Naive thymus-derived CD4-positive, alpha-beta T cell (primary cell): ENCODE measurements at regions of chr1 and their contacts with region 1.

Region 1: GRCh38 chr1:111346089-111346885 is 55.6 kb downstream of the CHIA start:
- DNase-seq: peak; percentile 74 to 94 (median 92)
- ATAC-seq: peak; percentile 94
- H3K4me3 ChIP-seq: peak overlapping the region; percentile 90
- H3K4me3 Mint-ChIP-seq: peak overlapping the region; percentile 85 to 97 (median 92)
- H3K27ac ChIP-seq: peak overlapping the region; percentile 61
- H3K27ac Mint-ChIP-seq: peak overlapping the region; percentile 38 to 97 (median 90)
- H3K4me1 ChIP-seq: peaks cover 5 to 9% of the 10 kb centered on the region in 2 donors
- H3K4me1 Mint-ChIP-seq: peaks cover 13 to 26% (median 19%) of the 10 kb centered on the region in 7 donors
- H3K27me3 ChIP-seq: no peaks in the 10 kb centered on the region
- H3K27me3 Mint-ChIP-seq: peaks cover 0 to 19% (median 0%) of the 10 kb centered on the region in 5 donors

Region 2: GRCh38 chr1:110783292-110783918 is 562.9 kb before region 1 on chr1:
- CTCF ChIA-PET with region 1: no interaction called
- POLR2A ChIA-PET with region 1: no interaction called
- intact Hi-C with region 1: no loop called
- DNase-seq: peak in 8 of 9 donors; percentile 44 to 78 (median 70)
- ATAC-seq: peak; percentile 84
- H3K4me3 ChIP-seq: no peak overlapping the region
- H3K4me3 Mint-ChIP-seq: peak overlapping the region in 4 of 10 donors; percentile 3 to 29 (median 21)
- H3K27ac ChIP-seq: no peak overlapping the region
- H3K27ac Mint-ChIP-seq: peak overlapping the region in 6 of 9 donors; percentile 9 to 88 (median 66)
- H3K4me1 ChIP-seq: peaks cover 54 to 63% of the 10 kb centered on the region in 2 donors
- H3K4me1 Mint-ChIP-seq: peaks cover 42 to 79% (median 70%) of the 10 kb centered on the region in 7 donors
- H3K27me3 ChIP-seq: no peaks in the 10 kb centered on the region
- H3K27me3 Mint-ChIP-seq: peaks cover 0 to 14% (median 0%) of the 10 kb centered on the region in 5 donors

Region 3: GRCh38 chr1:111139956-111140679 is 206.2 kb before region 1 on chr1 and contains the starts of genes CEPT1 and DRAM2:
- CTCF ChIA-PET with region 1: no interaction called
- POLR2A ChIA-PET with region 1: interaction called, 4 read pairs
- intact Hi-C with region 1: loop called (anchors 1 to 5 kb)
- DNase-seq: peak; percentile 77 to 93 (median 89)
- ATAC-seq: peak; percentile 95
- H3K4me3 ChIP-seq: peak within 1 kb of the TSS; percentile 91
- H3K4me3 Mint-ChIP-seq: peak within 1 kb of the TSS; percentile 87 to 100 (median 98)
- H3K27ac ChIP-seq: peak within 1 kb of the TSS; percentile 93
- H3K27ac Mint-ChIP-seq: peak within 1 kb of the TSS; percentile 91 to 100 (median 97)
- H3K4me1 ChIP-seq: peaks cover 18 to 22% of the 10 kb centered on the region in 2 donors
- H3K4me1 Mint-ChIP-seq: peaks cover 40 to 75% (median 57%) of the 10 kb centered on the region in 7 donors
- H3K27me3 ChIP-seq: no peaks in the 10 kb centered on the region
- H3K27me3 Mint-ChIP-seq: no peaks in the 10 kb centered on the region
- total RNA-seq, gene CEPT1: 39.1 to 57.5 (median 40.2) TPM
- total RNA-seq, gene DRAM2: 26.9 to 51.6 (median 43.5) TPM

Region 4: GRCh38 chr1:111203681-111204200 is 142.5 kb before region 1 on chr1:
- CTCF ChIA-PET with region 1: no interaction called
- POLR2A ChIA-PET with region 1: interaction called, 4 read pairs
- intact Hi-C with region 1: loop called in 1 of 2 experiments (anchors 5 kb)
- DNase-seq: peak; percentile 51 to 86 (median 82)
- ATAC-seq: peak; percentile 71
- H3K4me3 ChIP-seq: peak overlapping the region; percentile 84
- H3K4me3 Mint-ChIP-seq: peak overlapping the region; percentile 90 to 100 (median 99)
- H3K27ac ChIP-seq: peak overlapping the region; percentile 90
- H3K27ac Mint-ChIP-seq: peak overlapping the region; percentile 80 to 99 (median 96)
- H3K4me1 ChIP-seq: peaks cover 30 to 32% of the 10 kb centered on the region in 2 donors
- H3K4me1 Mint-ChIP-seq: peaks cover 32 to 76% (median 61%) of the 10 kb centered on the region in 7 donors
- H3K27me3 ChIP-seq: no peaks in the 10 kb centered on the region
- H3K27me3 Mint-ChIP-seq: no peaks in the 10 kb centered on the region

Region 5: GRCh38 chr1:111366256-111366655 is 20.0 kb after region 1 on chr1:
- CTCF ChIA-PET with region 1: no interaction called
- POLR2A ChIA-PET with region 1: no interaction called
- intact Hi-C with region 1: no loop called
- DNase-seq: no peak
- ATAC-seq: no peak
- H3K4me3 ChIP-seq: no peak overlapping the region
- H3K4me3 Mint-ChIP-seq: no peak overlapping the region
- H3K27ac ChIP-seq: no peak overlapping the region
- H3K27ac Mint-ChIP-seq: no peak overlapping the region
- H3K4me1 ChIP-seq: no peaks in the 10 kb centered on the region
- H3K4me1 Mint-ChIP-seq: no peaks in the 10 kb centered on the region
- H3K27me3 ChIP-seq: no peaks in the 10 kb centered on the region
- H3K27me3 Mint-ChIP-seq: peaks cover 15 to 46% (median 40%) of the 10 kb centered on the region in 5 donors

Region 6: GRCh38 chr1:111399792-111400610 is 53.7 kb after region 1 on chr1:
- CTCF ChIA-PET with region 1: no interaction called
- POLR2A ChIA-PET with region 1: interaction called, 3 read pairs
- intact Hi-C with region 1: loop called in 1 of 2 experiments (anchors 1 kb)
- DNase-seq: peak in 6 of 9 donors; percentile 19 to 43 (median 32)
- ATAC-seq: no peak
- H3K4me3 ChIP-seq: no peak overlapping the region
- H3K4me3 Mint-ChIP-seq: peak overlapping the region in 1 of 10 donors; percentile 35
- H3K27ac ChIP-seq: no peak overlapping the region
- H3K27ac Mint-ChIP-seq: peak overlapping the region in 1 of 9 donors; percentile 46
- H3K4me1 ChIP-seq: no peaks in the 10 kb centered on the region
- H3K4me1 Mint-ChIP-seq: peaks cover 3 to 17% (median 13%) of the 10 kb centered on the region in 7 donors
- H3K27me3 ChIP-seq: no peaks in the 10 kb centered on the region
- H3K27me3 Mint-ChIP-seq: peaks cover 0 to 64% (median 0%) of the 10 kb centered on the region in 5 donors

Region 7: GRCh38 chr1:111406321-111406768 is 60.1 kb after region 1 on chr1:
- CTCF ChIA-PET with region 1: no interaction called
- POLR2A ChIA-PET with region 1: no interaction called
- intact Hi-C with region 1: loop called in 1 of 2 experiments (anchors 2 kb)
- DNase-seq: peak in 8 of 9 donors; percentile 33 to 74 (median 64)
- ATAC-seq: peak; percentile 99
- H3K4me3 ChIP-seq: no peak overlapping the region
- H3K4me3 Mint-ChIP-seq: peak overlapping the region; percentile 29 to 81 (median 61)
- H3K27ac ChIP-seq: peak overlapping the region; percentile 54
- H3K27ac Mint-ChIP-seq: peak overlapping the region in 8 of 9 donors; percentile 67 to 90 (median 78)
- H3K4me1 ChIP-seq: peaks cover 12 to 24% of the 10 kb centered on the region in 2 donors
- H3K4me1 Mint-ChIP-seq: peaks cover 14 to 38% (median 31%) of the 10 kb centered on the region in 7 donors
- H3K27me3 ChIP-seq: no peaks in the 10 kb centered on the region
- H3K27me3 Mint-ChIP-seq: peaks cover 0 to 26% (median 0%) of the 10 kb centered on the region in 5 donors

Region 8: DNA sequence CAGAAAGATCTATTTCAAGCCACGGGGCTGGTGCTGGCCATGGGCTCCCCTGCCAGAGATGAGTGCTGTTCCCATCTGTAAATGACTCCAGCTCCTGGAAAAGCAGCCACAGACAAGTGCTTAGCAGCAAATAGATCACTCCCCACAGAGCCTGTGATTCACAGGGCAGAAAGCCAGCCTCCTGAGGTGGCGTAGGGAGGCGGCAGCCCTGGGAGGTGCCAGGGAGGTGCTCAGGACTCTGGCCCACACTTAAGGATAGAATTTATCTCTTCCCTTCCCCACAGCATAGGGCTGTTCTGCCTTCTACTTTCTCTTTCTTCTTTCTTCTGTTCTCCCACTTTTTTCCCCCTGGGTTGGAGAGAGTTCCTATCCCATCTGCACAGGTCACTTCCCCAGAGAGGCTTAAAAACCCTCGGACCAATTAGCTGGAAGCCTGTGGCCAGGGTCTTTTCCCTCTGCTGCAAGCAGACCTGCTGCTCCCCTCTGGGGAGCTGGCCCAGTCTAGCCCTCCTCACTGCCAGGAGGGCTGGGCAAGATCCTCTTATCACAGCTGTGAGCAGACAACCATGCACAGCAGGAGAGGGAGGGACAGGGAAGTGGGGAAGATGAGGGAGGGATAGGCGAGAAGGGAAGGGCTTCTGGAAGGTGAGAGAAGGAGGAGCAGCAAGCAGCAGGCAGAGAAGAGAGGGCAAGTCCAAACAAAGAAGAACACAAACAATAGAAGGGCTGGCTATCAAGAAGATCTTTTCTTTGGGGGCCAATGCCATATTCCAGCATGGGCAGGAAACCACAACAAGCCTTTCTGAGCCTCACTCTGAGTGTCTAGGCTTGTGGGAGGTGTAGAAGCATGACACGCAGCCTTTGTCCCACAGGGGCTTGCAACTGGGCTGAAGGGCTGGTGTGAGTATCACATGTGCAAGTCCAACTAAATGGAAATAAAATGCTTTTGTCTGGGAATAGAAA is 602.2 kb after region 1 on chr1:
- CTCF ChIA-PET with region 1: no interaction called
- POLR2A ChIA-PET with region 1: no interaction called
- intact Hi-C with region 1: no loop called
- DNase-seq: no peak
- ATAC-seq: no peak
- H3K4me3 ChIP-seq: no peak overlapping the region
- H3K4me3 Mint-ChIP-seq: no peak overlapping the region
- H3K27ac ChIP-seq: no peak overlapping the region
- H3K27ac Mint-ChIP-seq: no peak overlapping the region
- H3K4me1 ChIP-seq: no peaks in the 10 kb centered on the region
- H3K4me1 Mint-ChIP-seq: peaks cover 0 to 12% (median 7%) of the 10 kb centered on the region in 7 donors
- H3K27me3 ChIP-seq: no peaks in the 10 kb centered on the region
- H3K27me3 Mint-ChIP-seq: peaks cover 12 to 29% (median 23%) of the 10 kb centered on the region in 5 donors

Region 9: GRCh38 chr1:112998592-112999235 is 1652.4 kb after region 1 on chr1:
- CTCF ChIA-PET with region 1: no interaction called
- POLR2A ChIA-PET with region 1: no interaction called
- intact Hi-C with region 1: no loop called
- DNase-seq: no peak
- ATAC-seq: no peak
- H3K4me3 ChIP-seq: no peak overlapping the region
- H3K4me3 Mint-ChIP-seq: no peak overlapping the region
- H3K27ac ChIP-seq: no peak overlapping the region
- H3K27ac Mint-ChIP-seq: peak overlapping the region in 1 of 9 donors; percentile 36
- H3K4me1 ChIP-seq: no peaks in the 10 kb centered on the region
- H3K4me1 Mint-ChIP-seq: peaks cover 0 to 4% (median 0%) of the 10 kb centered on the region in 7 donors
- H3K27me3 ChIP-seq: no peaks in the 10 kb centered on the region
- H3K27me3 Mint-ChIP-seq: no peaks in the 10 kb centered on the region